Sigmoid colon (tissue), 7 donors: ENCODE measurements at regions of chr16 and their contacts with region 1.

Region 1: GRCh38 chr16:58733671-58734458 is at the start of gene GOT2:
- DNase-seq: peak; percentile 88
- H3K4me3 ChIP-seq: peak within 1 kb of the TSS; percentile 74 to 95 (median 82)
- H3K27ac ChIP-seq: peak within 1 kb of the TSS; percentile 84 to 89 (median 86)
- H3K4me1 ChIP-seq: peaks cover 5 to 25% (median 18%) of the 10 kb centered on the region in 4 donors
- H3K27me3 ChIP-seq: no peaks in the 10 kb centered on the region
- CTCF ChIP-seq: peak; percentile 53 to 88 (median 71)
- EP300 ChIP-seq: no peak
- POLR2A ChIP-seq: peak in 1 of 2 donors; percentile 21
- total RNA-seq, gene GOT2: 33.7 to 52.1 (median 44.4) TPM

Region 2: DNA sequence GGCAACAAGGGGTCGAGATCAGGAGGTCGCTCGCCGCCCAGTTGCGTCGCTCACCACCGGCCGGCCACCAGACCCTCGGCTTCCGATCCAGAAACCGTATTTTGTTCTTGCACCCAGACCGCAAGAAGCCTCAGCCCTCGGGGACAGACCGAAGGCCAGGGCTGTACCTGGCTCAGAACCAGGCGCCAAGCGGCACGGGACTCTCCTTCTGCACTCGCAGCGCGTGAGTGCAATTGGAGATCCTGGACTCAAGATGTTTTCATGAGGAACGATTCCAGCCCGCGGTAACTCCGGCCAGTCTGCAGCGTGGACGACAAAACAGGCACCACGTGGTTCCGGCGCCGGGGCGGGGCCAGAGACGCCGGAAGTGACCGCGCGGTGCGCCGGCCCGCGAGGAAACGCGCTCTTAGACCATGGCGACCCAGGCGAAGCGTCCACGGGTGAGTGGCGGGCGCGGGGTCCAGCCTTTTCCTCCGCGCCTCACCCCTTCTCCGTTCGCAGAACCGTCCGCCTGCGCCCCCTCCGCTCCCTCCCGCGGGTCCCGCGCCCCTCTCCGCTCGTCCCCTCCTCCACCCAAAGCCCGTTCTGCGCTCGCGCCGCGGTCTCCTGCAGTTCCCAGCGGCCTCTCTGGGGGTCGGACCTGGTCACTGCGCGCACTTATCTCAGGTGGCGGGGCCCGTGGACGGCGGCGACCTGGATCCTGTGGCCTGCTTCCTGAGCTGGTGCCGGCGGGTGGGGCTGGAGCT is 218.6 kb before region 1 on chr16 and contains the start of gene SETD6:
- intact Hi-C with region 1: loop called (anchors 10 kb)
- DNase-seq: peak; percentile 95
- H3K4me3 ChIP-seq: peak within 1 kb of the TSS; percentile 84 to 92 (median 86)
- H3K27ac ChIP-seq: peak within 1 kb of the TSS; percentile 78 to 88 (median 82)
- H3K4me1 ChIP-seq: peaks cover 0 to 28% (median 19%) of the 10 kb centered on the region in 4 donors
- H3K27me3 ChIP-seq: no peaks in the 10 kb centered on the region
- CTCF ChIP-seq: peak in 1 of 4 experiments; percentile 49
- EP300 ChIP-seq: no peak
- POLR2A ChIP-seq: no peak
- total RNA-seq, gene SETD6: 15.5 to 23.5 (median 19.9) TPM

Region 3: DNA sequence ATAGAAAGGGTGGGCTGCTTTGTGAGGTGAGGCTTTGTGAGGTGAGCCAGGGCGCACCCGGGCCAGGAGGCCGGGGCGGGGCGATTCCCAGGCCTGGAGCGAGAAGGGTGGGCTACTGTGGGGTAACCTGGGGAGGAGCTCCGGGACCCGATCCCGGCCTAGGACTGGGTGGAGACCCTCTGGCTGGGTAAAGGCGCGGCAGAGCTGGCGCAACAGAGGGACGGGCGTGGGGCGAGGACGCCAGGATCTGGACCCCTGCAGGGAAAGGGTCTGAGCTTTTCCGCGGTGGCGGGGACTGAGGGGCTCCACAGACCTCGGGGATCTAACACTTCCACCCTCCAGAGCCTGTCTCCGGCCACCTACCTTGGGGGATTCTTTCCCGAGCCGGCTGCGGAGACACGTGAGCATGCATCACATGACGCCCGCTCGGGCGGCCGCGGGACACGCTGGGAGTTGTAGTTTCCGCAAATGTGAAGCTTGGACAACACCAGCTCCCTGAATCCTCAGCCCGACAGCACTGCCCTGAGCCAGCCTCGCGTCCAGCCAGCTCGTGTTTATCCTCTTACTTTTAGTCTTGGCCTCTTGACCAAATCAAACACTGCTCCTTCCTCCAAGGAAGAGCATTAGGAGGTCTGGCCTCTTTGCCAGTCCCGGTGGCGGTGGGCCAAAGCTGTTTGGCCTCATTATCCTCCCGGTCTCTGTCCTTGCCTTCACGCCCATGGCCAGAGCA is 49.3 kb before region 1 on chr16 and contains the start of gene SLC38A7:
- intact Hi-C with region 1: loop called (anchors 1 kb)
- DNase-seq: peak; percentile 94
- H3K4me3 ChIP-seq: peak within 1 kb of the TSS; percentile 70 to 95 (median 74)
- H3K27ac ChIP-seq: peak within 1 kb of the TSS; percentile 70 to 80 (median 76)
- H3K4me1 ChIP-seq: peaks cover 0 to 22% (median 18%) of the 10 kb centered on the region in 4 donors
- H3K27me3 ChIP-seq: no peaks in the 10 kb centered on the region
- CTCF ChIP-seq: no peak
- EP300 ChIP-seq: no peak
- POLR2A ChIP-seq: no peak
- total RNA-seq, gene SLC38A7: 9.5 to 17.4 (median 12.1) TPM